Mammary epithelial cell (primary cell): ENCODE measurements at regions of chr13 and their contacts with region 1.

Region 1: DNA sequence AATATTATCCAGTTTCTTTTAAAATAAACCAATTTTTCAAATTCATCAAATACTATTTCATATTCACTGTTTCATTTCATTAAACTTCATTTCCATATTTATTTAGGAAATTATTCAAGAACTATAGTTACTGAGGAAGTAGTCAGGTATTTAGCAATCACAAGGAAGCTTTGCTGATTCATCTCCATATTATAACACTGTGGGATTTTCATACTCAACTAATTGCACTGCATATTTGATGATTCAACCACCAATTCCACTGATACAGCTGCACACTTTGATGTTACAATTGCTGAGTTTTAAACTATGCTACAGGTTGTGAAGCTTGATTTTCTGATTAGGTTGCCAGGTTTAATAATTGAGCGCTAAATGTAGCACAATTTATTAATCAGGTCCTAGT is 556.8 kb upstream of the SLITRK1 start:
- DNase-seq: peak; percentile 76
- H3K4me3 ChIP-seq: no peak overlapping the region
- H3K27ac ChIP-seq: no peak overlapping the region
- H3K4me1 ChIP-seq: peaks cover 3% of the 10 kb centered on the region
- H3K27me3 ChIP-seq: no peaks in the 10 kb centered on the region
- CTCF ChIP-seq: no peak

Region 2: DNA sequence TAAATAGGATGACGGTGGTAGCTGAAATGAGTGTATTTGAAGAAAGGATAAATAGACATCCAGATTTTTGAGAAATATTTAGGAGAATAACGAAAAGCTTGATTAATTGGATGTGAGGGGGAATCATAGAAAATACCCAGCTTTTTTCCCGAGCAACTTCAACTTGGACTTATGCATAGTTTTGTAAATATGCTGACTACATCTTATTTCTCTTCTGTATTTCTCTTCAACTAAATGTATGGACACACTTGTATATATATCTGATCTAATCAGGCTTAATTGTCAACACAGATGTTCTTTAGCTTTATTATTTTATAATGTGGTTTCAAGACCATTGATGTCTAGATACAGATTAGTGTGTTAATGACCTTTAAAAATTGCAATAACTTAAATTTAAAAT is 1241.8 kb before region 1 on chr13:
- CTCF ChIA-PET with region 1: interaction called, 18 read pairs
- dilution Hi-C with region 1: no loop called
- in situ Hi-C with region 1: no loop called
- intact Hi-C with region 1: no loop called
- DNase-seq: no peak
- H3K4me3 ChIP-seq: no peak overlapping the region
- H3K27ac ChIP-seq: no peak overlapping the region
- H3K4me1 ChIP-seq: no peaks in the 10 kb centered on the region
- H3K27me3 ChIP-seq: no peaks in the 10 kb centered on the region
- CTCF ChIP-seq: no peak